K562 (cell line): ENCODE measurements at regions of chr6 and their contacts with region 1.

Region 1: GRCh38 chr6:31739639-31740396 is at the start of gene MSH5:
- DNase-seq: peak; percentile 100
- ATAC-seq: peak; percentile 84
- H3K4me3 ChIP-seq: peak within 1 kb of the TSS; percentile 64
- H3K27ac ChIP-seq: peak within 1 kb of the TSS; percentile 95
- H3K4me1 ChIP-seq: peaks cover 56 to 61% of the 10 kb centered on the region in 2 experiments
- H3K27me3 ChIP-seq: no peaks in the 10 kb centered on the region
- CTCF ChIP-seq: peak in 1 of 3 experiments; percentile 13; a peak in 1 of 6 replicates
- EP300 ChIP-seq: peak; percentile 71
- POLR2A ChIP-seq: peak; percentile 96
- RAD21 ChIP-seq: peak in 1 of 2 experiments; percentile 28; a peak in 3 of 4 replicates
- polyA plus RNA-seq, gene MSH5: 12.5 to 14.0 TPM

Region 2: DNA sequence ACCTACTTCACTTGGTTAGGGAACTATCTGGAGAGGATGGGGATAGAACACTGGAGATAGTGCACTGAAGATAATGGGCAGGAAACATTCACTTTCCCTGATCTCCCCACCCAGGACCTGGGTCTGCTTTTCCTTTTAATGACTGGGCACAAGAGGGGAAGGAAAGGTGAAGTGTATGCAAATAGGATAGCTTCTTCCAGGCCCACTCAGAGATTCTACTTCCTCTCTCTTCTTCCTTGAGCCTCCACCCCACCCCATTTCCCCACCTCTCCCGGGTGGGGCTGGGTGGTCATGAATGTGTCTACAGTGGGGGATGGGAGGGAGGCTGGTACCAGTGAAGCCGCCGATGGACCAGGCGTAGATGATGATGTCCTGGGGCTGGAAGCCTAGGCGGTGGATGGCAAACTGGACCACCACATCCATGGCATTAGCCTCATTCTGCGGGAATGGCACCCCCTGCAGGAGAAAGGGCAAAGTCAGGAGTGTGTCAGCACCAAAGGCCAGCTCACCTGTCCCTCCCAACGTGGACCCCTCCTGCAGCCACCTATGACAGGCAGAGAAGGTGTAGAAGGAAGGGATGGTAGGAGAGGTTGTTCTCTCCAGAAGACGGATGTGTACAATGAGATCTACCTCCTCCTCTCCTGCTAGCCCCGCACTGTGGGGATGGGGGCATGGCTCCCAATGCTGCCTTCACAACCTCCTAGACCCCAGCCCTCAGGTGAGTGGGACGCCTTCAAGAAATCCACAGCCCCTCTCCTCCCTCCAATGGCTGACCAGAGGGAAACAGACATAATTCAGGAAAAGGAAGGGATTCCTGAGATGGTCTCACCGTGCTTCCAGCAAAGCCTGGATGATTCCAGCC is 50.3 kb before region 1 on chr6:
- CTCF ChIA-PET with region 1: no interaction called
- POLR2A ChIA-PET with region 1: interaction called, 76 read pairs
- in situ Hi-C with region 1: no loop called
- intact Hi-C with region 1: loop called (anchors 2 kb)
- DNase-seq: peak in 2 of 4 experiments; percentile 66 to 72
- ATAC-seq: peak; percentile 60
- H3K4me3 ChIP-seq: no peak overlapping the region; the same call in 1 of the 2 replicates
- H3K27ac ChIP-seq: peak overlapping the region; percentile 88
- H3K4me1 ChIP-seq: peaks cover 63 to 65% of the 10 kb centered on the region in 2 experiments
- H3K27me3 ChIP-seq: no peaks in the 10 kb centered on the region
- CTCF ChIP-seq: peak; percentile 63 to 96 (median 68)
- EP300 ChIP-seq: no peak
- POLR2A ChIP-seq: no peak
- RAD21 ChIP-seq: peak in 1 of 2 experiments; percentile 45; a peak in 2 of 4 replicates

Region 3: GRCh38 chr6:31729515-31729978 is 10.3 kb before region 1 on chr6:
- CTCF ChIA-PET with region 1: no interaction called
- POLR2A ChIA-PET with region 1: interaction called, 236 read pairs
- in situ Hi-C with region 1: no loop called
- intact Hi-C with region 1: no loop called
- DNase-seq: peak; percentile 91 to 97 (median 94)
- ATAC-seq: peak; percentile 84
- H3K4me3 ChIP-seq: peak overlapping the region; percentile 65
- H3K27ac ChIP-seq: peak overlapping the region; percentile 75
- H3K4me1 ChIP-seq: peaks cover 53 to 67% of the 10 kb centered on the region in 2 experiments
- H3K27me3 ChIP-seq: no peaks in the 10 kb centered on the region
- CTCF ChIP-seq: peak; percentile 12 to 99 (median 95); a peak in 5 of 6 replicates
- EP300 ChIP-seq: no peak; the same call in 1 of the 2 replicates
- POLR2A ChIP-seq: no peak; the same call in 1 of the 2 replicates
- RAD21 ChIP-seq: peak; percentile 99

Region 4: GRCh38 chr6:31763619-31763940 is 23.8 kb after region 1 on chr6:
- CTCF ChIA-PET with region 1: no interaction called
- POLR2A ChIA-PET with region 1: interaction called, 85 read pairs
- in situ Hi-C with region 1: no loop called
- intact Hi-C with region 1: no loop called
- DNase-seq: no peak
- ATAC-seq: peak; percentile 4
- H3K4me3 ChIP-seq: no peak overlapping the region
- H3K27ac ChIP-seq: no peak overlapping the region
- H3K4me1 ChIP-seq: peaks cover 0 to 25% of the 10 kb centered on the region in 2 experiments; a peak in 3 of 5 replicates
- H3K27me3 ChIP-seq: no peaks in the 10 kb centered on the region
- CTCF ChIP-seq: no peak
- EP300 ChIP-seq: no peak
- POLR2A ChIP-seq: no peak
- RAD21 ChIP-seq: no peak

Region 5: GRCh38 chr6:31795616-31796298 is 55.9 kb after region 1 on chr6 and contains the start of gene VARS1:
- CTCF ChIA-PET with region 1: no interaction called
- POLR2A ChIA-PET with region 1: interaction called, 5 read pairs
- in situ Hi-C with region 1: no loop called
- intact Hi-C with region 1: loop called (anchors 2 kb)
- DNase-seq: peak; percentile 99 to 100 (median 100)
- ATAC-seq: peak; percentile 92
- H3K4me3 ChIP-seq: peak within 1 kb of the TSS; percentile 61
- H3K27ac ChIP-seq: peak within 1 kb of the TSS; percentile 97
- H3K4me1 ChIP-seq: peaks cover 17 to 44% of the 10 kb centered on the region in 2 experiments
- H3K27me3 ChIP-seq: no peaks in the 10 kb centered on the region
- CTCF ChIP-seq: peak; percentile 99 to 100 (median 100)
- EP300 ChIP-seq: peak; percentile 59; the same call in 1 of the 2 replicates
- POLR2A ChIP-seq: peak; percentile 38; the same call in 1 of the 2 replicates
- RAD21 ChIP-seq: peak; percentile 99 to 100
- polyA plus RNA-seq, gene VARS1: 2.9 to 10.4 TPM

Region 6: GRCh38 chr6:31971993-31972708 is 232.3 kb after region 1 on chr6 and contains the start of gene DXO:
- CTCF ChIA-PET with region 1: no interaction called
- POLR2A ChIA-PET with region 1: no interaction called
- in situ Hi-C with region 1: no loop called
- intact Hi-C with region 1: loop called (anchors 10 kb)
- DNase-seq: peak; percentile 98 to 99 (median 98)
- ATAC-seq: peak; percentile 84
- H3K4me3 ChIP-seq: peak within 1 kb of the TSS; percentile 56
- H3K27ac ChIP-seq: peak within 1 kb of the TSS; percentile 84
- H3K4me1 ChIP-seq: peaks cover 56 to 65% of the 10 kb centered on the region in 2 experiments; a peak in 4 of 5 replicates
- H3K27me3 ChIP-seq: no peaks in the 10 kb centered on the region
- CTCF ChIP-seq: peak in 1 of 3 experiments; percentile 0; a peak in 1 of 6 replicates
- EP300 ChIP-seq: peak; percentile 62
- POLR2A ChIP-seq: peak; percentile 82
- RAD21 ChIP-seq: no peak; a peak in 2 of 4 replicates
- polyA plus RNA-seq, gene DXO: 6.4 to 7.3 TPM

Region 7: GRCh38 chr6:32212076-32212760 is 472.4 kb after region 1 on chr6:
- CTCF ChIA-PET with region 1: no interaction called
- POLR2A ChIA-PET with region 1: no interaction called
- in situ Hi-C with region 1: no loop called
- intact Hi-C with region 1: no loop called
- DNase-seq: no peak
- ATAC-seq: peak; percentile 15; the same call in 1 of the 3 replicates
- H3K4me3 ChIP-seq: no peak overlapping the region
- H3K27ac ChIP-seq: no peak overlapping the region
- H3K4me1 ChIP-seq: peaks cover 10 to 13% of the 10 kb centered on the region in 2 experiments; a peak in 4 of 5 replicates
- H3K27me3 ChIP-seq: peaks cover 0 to 14% of the 10 kb centered on the region in 2 experiments; a peak in 2 of 5 replicates
- CTCF ChIP-seq: no peak
- EP300 ChIP-seq: no peak
- POLR2A ChIP-seq: no peak
- RAD21 ChIP-seq: no peak